ENCODE measurements at regions of chr5 and their contacts with region 1.

Region 1: GRCh38 chr5:148730943-148731861 is 76.9 kb upstream of the HTR4 start:
- DNase-seq: no peak
- ATAC-seq: peak; percentile 96
- H3K4me3 Mint-ChIP-seq: peak overlapping the region; percentile 72
- H3K27ac Mint-ChIP-seq: peak overlapping the region; percentile 59
- H3K4me1 Mint-ChIP-seq: peaks cover 8% of the 10 kb centered on the region
- H3K27me3 Mint-ChIP-seq: peaks cover 5% of the 10 kb centered on the region
- CTCF ChIP-seq: peak; percentile 31

Region 2: GRCh38 chr5:148383564-148384379 is 347.4 kb before region 1 on chr5 and contains the start of gene FBXO38:
- CTCF ChIA-PET with region 1: no interaction called
- POLR2A ChIA-PET with region 1: no interaction called
- intact Hi-C with region 1: loop called (anchors 5 kb)
- DNase-seq: peak; percentile 92
- ATAC-seq: peak; percentile 97
- H3K4me3 Mint-ChIP-seq: peak within 1 kb of the TSS; percentile 97
- H3K27ac Mint-ChIP-seq: peak within 1 kb of the TSS; percentile 99
- H3K4me1 Mint-ChIP-seq: peaks cover 50% of the 10 kb centered on the region
- H3K27me3 Mint-ChIP-seq: no peaks in the 10 kb centered on the region
- CTCF ChIP-seq: no peak
- total RNA-seq, gene FBXO38: 62.8 and 81.9 TPM in 2 replicates

Region 3: GRCh38 chr5:148957591-148958202 is 226.5 kb after region 1 on chr5:
- CTCF ChIA-PET with region 1: interaction called, 548 read pairs
- POLR2A ChIA-PET with region 1: no interaction called
- intact Hi-C with region 1: loop called (anchors 1 kb)
- DNase-seq: peak; percentile 27
- ATAC-seq: peak; percentile 66
- H3K4me3 Mint-ChIP-seq: no peak overlapping the region
- H3K27ac Mint-ChIP-seq: no peak overlapping the region
- H3K4me1 Mint-ChIP-seq: no peaks in the 10 kb centered on the region
- H3K27me3 Mint-ChIP-seq: peaks cover 2% of the 10 kb centered on the region
- CTCF ChIP-seq: no peak

Region 4: GRCh38 chr5:149007174-149007573 is 276.0 kb after region 1 on chr5:
- CTCF ChIA-PET with region 1: interaction called, 118 read pairs
- POLR2A ChIA-PET with region 1: no interaction called
- intact Hi-C with region 1: no loop called
- DNase-seq: no peak
- ATAC-seq: no peak
- H3K4me3 Mint-ChIP-seq: no peak overlapping the region
- H3K27ac Mint-ChIP-seq: no peak overlapping the region
- H3K4me1 Mint-ChIP-seq: no peaks in the 10 kb centered on the region
- H3K27me3 Mint-ChIP-seq: no peaks in the 10 kb centered on the region
- CTCF ChIP-seq: no peak

Region 5: GRCh38 chr5:149268928-149269557 is 537.8 kb after region 1 on chr5:
- CTCF ChIA-PET with region 1: no interaction called
- POLR2A ChIA-PET with region 1: no interaction called
- intact Hi-C with region 1: loop called (anchors 10 kb)
- DNase-seq: no peak
- ATAC-seq: peak; percentile 30
- H3K4me3 Mint-ChIP-seq: peak overlapping the region; percentile 4
- H3K27ac Mint-ChIP-seq: peak overlapping the region; percentile 32
- H3K4me1 Mint-ChIP-seq: peaks cover 15% of the 10 kb centered on the region
- H3K27me3 Mint-ChIP-seq: peaks cover 51% of the 10 kb centered on the region
- CTCF ChIP-seq: peak; percentile 69

Measured in activated B cell treated with CpG ODN at 0.5 μM for 24 hours (primary cell).